MCF 10A (cell line): ENCODE measurements at regions of chr13 and their contacts with region 1.

Region 1: DNA sequence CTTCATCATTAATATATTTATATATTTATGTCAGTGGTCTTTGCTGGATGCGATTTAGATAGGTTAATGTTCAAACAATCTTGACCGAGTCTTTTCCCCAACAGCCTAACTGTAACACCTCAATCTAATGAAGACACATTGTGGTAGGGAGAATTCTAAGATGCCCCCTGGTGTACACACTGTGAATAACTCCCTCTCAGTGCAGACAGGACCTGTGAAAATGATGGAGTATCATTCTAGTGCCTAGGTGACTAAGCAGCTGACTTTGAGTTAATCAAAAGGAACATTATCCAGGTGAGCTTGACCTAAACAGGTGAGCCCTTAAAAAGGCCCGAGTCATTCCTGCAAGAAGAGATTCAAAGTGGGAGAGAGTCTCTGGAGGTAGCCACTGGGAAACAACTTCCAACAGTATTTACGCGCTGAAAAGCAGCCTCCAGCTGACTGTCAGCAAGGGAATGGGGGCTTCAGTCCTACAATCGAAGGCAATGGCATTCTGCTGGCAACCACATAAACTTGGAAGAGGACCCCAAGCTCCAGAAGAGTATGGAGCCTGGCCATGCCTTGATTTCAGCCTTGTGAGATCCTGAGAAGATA is 28.0 kb upstream of the KBTBD7 start:
- DNase-seq: peak; percentile 75
- H3K4me3 Mint-ChIP-seq: no peak overlapping the region
- H3K27ac Mint-ChIP-seq: no peak overlapping the region
- H3K4me1 Mint-ChIP-seq: peaks cover 7% of the 10 kb centered on the region
- H3K27me3 Mint-ChIP-seq: no peaks in the 10 kb centered on the region
- CTCF ChIP-seq: peak; percentile 71

Region 2: DNA sequence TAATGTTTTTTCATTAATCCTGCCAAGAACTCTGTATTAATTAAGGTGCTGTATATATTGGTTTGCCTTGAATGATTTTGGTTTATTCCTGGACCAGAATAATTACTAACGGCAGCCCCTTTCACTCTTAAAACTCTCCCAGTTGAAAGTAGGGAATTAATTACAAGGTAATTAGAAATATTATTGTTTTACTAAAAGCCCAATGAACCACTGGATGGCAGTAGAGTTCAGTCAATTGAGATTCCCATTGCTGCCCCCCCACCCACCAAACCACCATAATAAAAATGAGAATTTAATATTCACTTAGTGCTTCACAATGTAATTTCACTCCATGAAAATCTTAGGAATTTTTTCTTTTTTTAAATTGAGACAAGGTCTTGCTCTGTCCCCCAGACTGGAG is 147.3 kb before region 1 on chr13:
- CTCF ChIA-PET with region 1: interaction called, 30 read pairs
- POLR2A ChIA-PET with region 1: no interaction called
- intact Hi-C with region 1: loop called (anchors 1 kb)
- DNase-seq: peak; percentile 53
- H3K4me3 Mint-ChIP-seq: no peak overlapping the region
- H3K27ac Mint-ChIP-seq: no peak overlapping the region
- H3K4me1 Mint-ChIP-seq: no peaks in the 10 kb centered on the region
- H3K27me3 Mint-ChIP-seq: no peaks in the 10 kb centered on the region
- CTCF ChIP-seq: peak; percentile 57

Region 3: DNA sequence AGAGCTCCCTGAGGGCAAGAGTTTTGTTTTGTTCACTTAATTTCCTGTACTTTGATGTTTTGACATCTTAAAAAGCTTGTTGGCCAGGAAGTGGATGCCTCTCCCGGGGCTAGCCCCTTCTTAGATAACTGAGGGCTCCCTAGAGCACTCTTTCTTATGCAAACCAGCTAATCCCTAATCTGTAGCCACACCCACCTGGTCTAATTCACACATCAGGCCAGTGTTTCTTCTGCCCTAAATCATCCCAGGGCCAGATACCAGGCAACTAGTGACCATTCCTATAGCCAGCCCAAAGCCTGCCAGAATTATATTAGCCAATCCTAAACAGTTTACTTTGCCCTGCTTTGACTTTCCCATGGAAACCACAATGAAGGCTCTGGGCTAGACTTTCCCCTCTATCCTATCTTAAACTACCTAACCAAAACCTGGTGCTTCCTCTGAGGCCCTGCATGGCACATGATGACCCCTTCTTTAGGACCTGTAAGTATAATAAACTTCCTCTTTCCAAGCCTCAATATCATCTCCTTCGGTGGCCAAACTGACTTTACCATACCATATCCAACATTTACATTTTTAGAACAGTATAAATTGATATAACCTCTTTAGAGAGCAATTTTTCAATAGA is 136.3 kb before region 1 on chr13:
- CTCF ChIA-PET with region 1: interaction called, 13 read pairs
- POLR2A ChIA-PET with region 1: interaction called, 5 read pairs
- intact Hi-C with region 1: no loop called
- DNase-seq: no peak
- H3K4me3 Mint-ChIP-seq: no peak overlapping the region
- H3K27ac Mint-ChIP-seq: no peak overlapping the region
- H3K4me1 Mint-ChIP-seq: no peaks in the 10 kb centered on the region
- H3K27me3 Mint-ChIP-seq: no peaks in the 10 kb centered on the region
- CTCF ChIP-seq: no peak

Region 4: DNA sequence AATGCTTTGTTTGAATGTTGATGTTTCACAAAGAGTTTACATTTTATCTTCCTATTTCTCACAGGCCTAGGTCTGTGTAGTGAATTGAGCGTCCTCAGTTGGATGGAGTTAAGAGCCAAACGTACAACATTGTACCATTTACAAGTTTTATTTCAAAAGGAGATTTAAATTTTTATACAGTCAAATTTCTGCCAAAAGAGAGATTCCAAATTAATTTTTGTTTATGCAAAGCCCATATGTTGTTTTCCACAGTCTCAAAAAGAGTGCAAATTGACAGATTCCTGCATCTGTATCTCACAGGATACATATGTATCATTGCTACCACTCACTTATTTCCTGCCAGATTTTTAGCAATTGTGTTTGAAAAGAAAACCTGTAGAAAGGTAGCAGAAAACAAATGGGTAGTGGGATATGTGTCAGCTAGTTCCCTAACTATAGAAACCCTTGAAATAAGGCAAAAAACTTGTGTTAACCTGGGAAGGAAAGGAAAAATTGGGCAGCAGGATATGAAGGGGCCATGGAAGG is 872.2 kb after region 1 on chr13:
- CTCF ChIA-PET with region 1: no interaction called
- POLR2A ChIA-PET with region 1: no interaction called
- intact Hi-C with region 1: no loop called
- DNase-seq: no peak
- H3K4me3 Mint-ChIP-seq: no peak overlapping the region
- H3K27ac Mint-ChIP-seq: no peak overlapping the region
- H3K4me1 Mint-ChIP-seq: no peaks in the 10 kb centered on the region
- H3K27me3 Mint-ChIP-seq: no peaks in the 10 kb centered on the region
- CTCF ChIP-seq: no peak